ENCODE measurements at regions of chr19 and their contacts with region 1.

Region 1: DNA sequence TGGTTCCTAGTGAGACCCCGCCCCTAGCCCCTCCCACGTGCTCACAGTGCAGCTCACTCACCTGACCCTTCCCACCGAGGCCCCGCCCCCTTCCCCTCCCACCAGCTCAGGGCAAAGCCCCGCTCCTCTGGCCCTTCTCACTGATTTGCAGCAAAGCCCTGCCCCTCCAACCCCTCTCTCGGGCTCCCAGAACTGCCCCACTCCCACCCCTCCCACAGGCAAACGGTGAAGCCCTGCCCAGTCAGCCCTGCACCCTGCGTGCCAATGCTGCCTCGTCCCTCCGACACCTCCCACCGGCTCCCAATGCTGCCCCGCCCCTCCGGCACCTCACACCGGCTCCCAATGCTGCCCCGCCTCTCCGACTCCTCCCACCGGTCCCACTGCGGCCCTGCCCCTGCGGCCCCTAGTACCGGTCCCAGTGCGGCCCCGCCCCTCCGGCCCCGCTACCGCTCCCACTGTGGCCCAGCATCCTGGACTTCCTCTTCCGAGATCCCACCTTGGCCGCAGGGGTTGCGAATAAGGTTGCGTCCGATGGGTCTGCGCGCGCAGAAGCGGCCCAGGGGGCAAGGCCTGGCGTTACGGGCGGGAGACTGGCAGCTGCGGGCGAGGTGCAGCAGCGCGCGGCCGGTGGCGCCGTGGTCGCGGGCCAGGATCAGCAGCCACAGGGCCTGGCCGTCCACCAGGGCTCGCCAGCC is 834 bp downstream of the FBXO27 start:
- DNase-seq: peak; percentile 92
- H3K4me3 Mint-ChIP-seq: peak overlapping the region; percentile 68
- H3K27ac Mint-ChIP-seq: no peak overlapping the region
- H3K4me1 Mint-ChIP-seq: peaks cover 15% of the 10 kb centered on the region
- H3K27me3 Mint-ChIP-seq: peaks cover 7% of the 10 kb centered on the region

Region 2: DNA sequence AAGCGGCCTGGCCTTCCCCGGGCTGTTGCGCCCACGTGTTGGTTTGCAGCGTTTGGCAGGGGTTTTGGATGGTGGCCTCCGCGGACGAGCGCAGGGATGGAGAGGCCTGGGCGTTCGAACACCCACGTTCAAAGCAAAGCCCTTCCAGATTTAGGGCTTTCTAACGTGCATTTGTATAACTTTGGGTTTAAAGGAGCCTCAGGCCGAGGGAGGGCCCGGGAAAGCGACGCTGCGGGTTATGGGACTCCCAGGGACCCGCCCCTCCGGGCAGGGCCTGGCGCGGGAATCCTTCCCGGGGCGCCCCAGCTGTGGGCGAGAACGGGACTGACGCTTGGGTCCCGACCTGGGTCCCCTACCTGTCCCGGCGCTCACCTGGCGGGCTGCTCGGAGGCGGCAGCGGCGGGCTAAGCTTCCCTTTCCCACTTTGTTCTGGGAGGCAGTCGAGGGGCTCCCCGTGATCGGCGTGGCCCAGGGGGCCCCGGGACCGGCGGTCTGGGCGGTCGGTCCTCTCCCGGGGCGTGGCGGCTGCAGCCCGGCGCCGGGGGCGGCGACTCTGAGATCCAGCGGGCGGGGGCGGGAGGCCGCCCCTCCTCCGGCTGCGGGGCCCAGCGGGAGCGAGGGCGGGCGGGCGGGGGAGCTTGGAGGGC is 56.2 kb before region 1 on chr19 and contains the start of gene FBXO17:
- CTCF ChIA-PET with region 1: interaction called, 3 read pairs
- POLR2A ChIA-PET with region 1: no interaction called
- intact Hi-C with region 1: loop called (anchors 5 kb)
- DNase-seq: no peak
- H3K4me3 Mint-ChIP-seq: no peak within 1 kb of the TSS
- H3K27ac Mint-ChIP-seq: no peak within 1 kb of the TSS
- H3K4me1 Mint-ChIP-seq: peaks cover 24% of the 10 kb centered on the region
- H3K27me3 Mint-ChIP-seq: peaks cover 25% of the 10 kb centered on the region
- total RNA-seq, gene FBXO17: not detected

Measured in activated CD4-positive, alpha-beta memory T cell treated with anti-CD3 and anti-CD28 coated beads for 36 hours (primary cell).